PC-3 (cell line): ENCODE measurements at regions of chr19 and their contacts with region 1.

Region 1: DNA sequence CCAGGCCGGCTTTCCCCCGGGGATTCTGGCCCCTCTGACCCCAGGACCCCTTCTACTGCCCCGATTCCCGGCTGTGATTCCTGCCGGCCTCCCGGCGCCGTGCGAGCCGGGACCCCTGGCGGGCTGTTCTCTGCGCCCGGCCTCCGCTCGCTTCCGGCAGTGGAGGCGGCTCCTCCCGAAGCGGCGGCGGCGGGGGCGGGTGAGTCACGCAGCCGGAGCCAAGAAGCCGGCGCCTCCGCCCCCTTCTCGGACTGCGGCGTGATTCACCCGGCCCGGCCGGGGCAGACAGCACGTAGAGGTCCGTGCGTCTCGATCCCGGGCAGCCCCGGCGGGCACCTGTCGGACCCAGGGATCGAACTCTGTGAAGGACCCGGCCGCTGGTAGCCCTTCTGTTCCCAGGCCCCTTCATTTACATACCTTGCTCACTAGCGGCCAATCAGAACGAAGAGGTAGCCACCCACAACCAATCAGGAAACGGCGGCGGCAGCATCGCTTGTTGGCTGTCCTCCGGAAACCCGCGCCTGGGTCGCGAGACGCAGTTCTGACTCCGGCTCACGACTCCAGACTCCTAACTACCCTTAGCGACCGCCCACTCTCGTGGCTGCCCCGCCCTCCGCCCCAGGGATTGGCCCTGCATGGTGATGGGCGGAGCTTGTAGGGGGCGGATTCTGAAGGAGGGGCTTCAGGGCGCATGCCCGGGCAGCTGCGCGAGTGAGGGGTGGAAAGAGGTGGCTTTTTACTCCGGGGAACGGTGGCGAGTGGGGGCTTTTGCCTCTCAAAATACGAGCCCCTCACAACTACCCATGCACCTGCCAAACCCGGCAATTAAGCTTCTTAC is at the start of gene SERTAD1:
- DNase-seq: peak; percentile 96
- ATAC-seq: peak; percentile 77
- H3K4me3 ChIP-seq: peak within 1 kb of the TSS; percentile 97
- H3K27ac ChIP-seq: peak within 1 kb of the TSS; percentile 64
- H3K4me1 ChIP-seq: peaks cover 12% of the 10 kb centered on the region
- H3K27me3 ChIP-seq: no peaks in the 10 kb centered on the region
- CTCF ChIP-seq: peak; percentile 62
- total RNA-seq, gene SERTAD1: 16.1 and 16.8 TPM in 2 replicates

Region 2: DNA sequence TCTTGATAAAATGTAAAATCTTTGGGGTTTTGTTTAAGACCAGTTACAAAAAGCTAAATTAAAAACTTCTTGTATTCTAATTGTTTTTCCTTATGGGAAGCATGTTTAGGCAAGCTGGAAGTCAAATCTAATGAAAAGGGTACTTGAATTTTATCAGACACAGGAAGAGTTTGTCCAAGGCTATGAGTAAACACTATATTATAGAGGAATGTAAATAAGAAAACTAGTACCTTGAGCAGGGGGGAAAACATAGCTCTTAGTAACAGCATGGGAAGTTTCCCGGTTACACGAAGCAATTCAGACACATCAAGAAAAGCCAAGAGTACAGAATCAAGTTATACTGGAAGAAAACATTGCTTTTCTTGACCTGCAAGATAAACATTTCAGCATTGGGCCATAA is 315.1 kb before region 1 on chr19:
- CTCF ChIA-PET with region 1: no interaction called
- POLR2A ChIA-PET with region 1: interaction called, 13 read pairs
- intact Hi-C with region 1: no loop called
- DNase-seq: no peak
- ATAC-seq: no peak
- H3K4me3 ChIP-seq: no peak overlapping the region
- H3K27ac ChIP-seq: no peak overlapping the region
- H3K4me1 ChIP-seq: no peaks in the 10 kb centered on the region
- H3K27me3 ChIP-seq: no peaks in the 10 kb centered on the region
- CTCF ChIP-seq: no peak

Region 3: DNA sequence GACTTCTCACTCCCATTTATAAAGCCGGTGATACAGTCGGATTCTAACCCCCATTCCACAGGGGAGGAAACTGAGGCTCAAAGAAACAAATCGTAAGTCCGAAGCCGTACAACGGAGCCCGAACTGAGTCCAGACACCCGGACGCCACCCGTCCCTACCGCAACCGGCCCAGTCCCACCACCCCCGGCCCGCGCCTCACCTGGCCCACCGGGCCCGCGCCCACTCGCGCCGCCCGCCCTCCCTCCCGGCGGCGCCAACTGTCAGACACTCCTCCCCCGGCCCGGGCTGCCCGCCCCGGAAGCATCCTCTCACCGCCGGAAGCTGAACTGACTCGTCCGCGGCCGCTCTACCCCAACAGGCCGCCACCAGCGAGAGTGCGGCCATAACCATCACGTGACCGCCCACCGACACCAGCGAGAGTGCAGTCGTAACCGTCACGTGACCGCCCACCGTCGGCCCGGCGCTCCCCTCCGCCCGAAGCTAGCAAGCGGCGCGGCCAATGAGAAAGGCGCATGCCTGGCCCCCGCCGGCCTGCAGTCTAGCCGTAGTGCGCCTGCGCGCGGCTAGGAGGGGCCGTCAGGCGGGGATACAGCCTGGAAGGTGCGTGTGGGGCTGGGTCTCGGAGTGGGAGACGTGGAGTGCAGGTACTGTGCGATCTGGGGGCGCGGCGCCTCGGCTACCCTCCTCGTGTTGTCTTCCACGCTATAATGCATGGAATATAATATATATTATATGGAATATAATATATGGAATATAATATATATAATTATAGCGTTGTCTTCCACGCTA is 77.3 kb before region 1 on chr19 and contains the starts of genes C19orf47 and PLD3:
- CTCF ChIA-PET with region 1: interaction called, 8 read pairs
- POLR2A ChIA-PET with region 1: no interaction called
- intact Hi-C with region 1: loop called (anchors 5 kb)
- DNase-seq: peak; percentile 97
- ATAC-seq: peak; percentile 99
- H3K4me3 ChIP-seq: peak within 1 kb of the TSS; percentile 93
- H3K27ac ChIP-seq: no peak within 1 kb of the TSS
- H3K4me1 ChIP-seq: no peaks in the 10 kb centered on the region; the same call in 1 of the 2 replicates
- H3K27me3 ChIP-seq: no peaks in the 10 kb centered on the region
- CTCF ChIP-seq: no peak
- total RNA-seq, gene C19orf47: 13.9 and 18.2 TPM in 2 replicates
- total RNA-seq, gene PLD3: 95.4 and 96.1 TPM in 2 replicates

Region 4: GRCh38 chr19:40381321-40381720 is 44.3 kb before region 1 on chr19:
- CTCF ChIA-PET with region 1: no interaction called
- POLR2A ChIA-PET with region 1: no interaction called
- intact Hi-C with region 1: no loop called
- DNase-seq: no peak
- ATAC-seq: no peak
- H3K4me3 ChIP-seq: no peak overlapping the region
- H3K27ac ChIP-seq: no peak overlapping the region
- H3K4me1 ChIP-seq: no peaks in the 10 kb centered on the region
- H3K27me3 ChIP-seq: no peaks in the 10 kb centered on the region
- CTCF ChIP-seq: no peak

Region 5: GRCh38 chr19:40410030-40410389 is 15.7 kb before region 1 on chr19:
- CTCF ChIA-PET with region 1: no interaction called
- POLR2A ChIA-PET with region 1: no interaction called
- intact Hi-C with region 1: no loop called
- DNase-seq: no peak
- ATAC-seq: no peak
- H3K4me3 ChIP-seq: no peak overlapping the region
- H3K27ac ChIP-seq: no peak overlapping the region
- H3K4me1 ChIP-seq: no peaks in the 10 kb centered on the region
- H3K27me3 ChIP-seq: no peaks in the 10 kb centered on the region
- CTCF ChIP-seq: no peak

Region 6: DNA sequence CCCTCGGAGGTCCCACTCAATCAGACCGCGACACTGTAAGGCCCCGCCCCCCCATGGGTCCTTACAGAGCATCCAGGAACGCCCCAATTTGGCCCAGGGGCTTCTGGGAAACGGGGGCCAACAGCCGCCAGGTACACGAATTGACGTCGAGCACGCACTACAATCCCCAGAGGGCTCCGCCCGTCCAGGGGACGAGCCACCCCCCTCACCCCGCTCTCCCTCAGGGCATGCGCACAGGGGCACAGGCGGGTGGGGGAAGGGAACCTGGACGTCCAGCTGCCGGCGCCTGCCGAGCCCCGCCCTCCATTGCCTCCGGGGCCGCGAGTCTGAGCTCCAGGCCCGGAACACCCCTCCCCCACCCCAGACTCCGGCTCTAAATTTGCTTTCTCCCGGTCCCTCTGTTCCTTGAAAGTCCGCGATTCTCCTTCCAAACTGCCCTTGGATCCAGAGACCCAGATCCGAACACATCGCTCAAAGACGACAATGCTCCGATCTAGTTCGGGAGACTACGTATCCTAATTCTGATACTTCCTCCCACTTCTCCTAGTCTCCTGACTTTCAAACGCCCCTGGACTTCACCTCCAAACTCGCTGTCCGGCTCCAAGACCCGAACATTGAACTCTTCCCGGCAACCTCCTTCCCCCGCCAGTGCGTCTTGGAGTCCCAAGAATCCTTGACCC is 17.6 kb after region 1 on chr19:
- CTCF ChIA-PET with region 1: interaction called, 4 read pairs
- POLR2A ChIA-PET with region 1: interaction called, 3 read pairs
- intact Hi-C with region 1: loop called (anchors 2 kb)
- DNase-seq: peak; percentile 98
- ATAC-seq: peak; percentile 68
- H3K4me3 ChIP-seq: peak overlapping the region; percentile 97
- H3K27ac ChIP-seq: peak overlapping the region; percentile 68
- H3K4me1 ChIP-seq: peaks cover 12% of the 10 kb centered on the region; the same call in 1 of the 2 replicates
- H3K27me3 ChIP-seq: no peaks in the 10 kb centered on the region
- CTCF ChIP-seq: no peak

Region 7: GRCh38 chr19:40502647-40503319 is 77.1 kb after region 1 on chr19:
- CTCF ChIA-PET with region 1: no interaction called
- POLR2A ChIA-PET with region 1: no interaction called
- intact Hi-C with region 1: no loop called
- DNase-seq: peak; percentile 21
- ATAC-seq: no peak; the same call in 1 of the 2 replicates
- H3K4me3 ChIP-seq: no peak overlapping the region
- H3K27ac ChIP-seq: no peak overlapping the region
- H3K4me1 ChIP-seq: no peaks in the 10 kb centered on the region
- H3K27me3 ChIP-seq: no peaks in the 10 kb centered on the region
- CTCF ChIP-seq: 0 out of 2 replicates have a peak, but pooled peaks have one; percentile 22